ENCODE measurements at regions of chr4 and their contacts with region 1.

Region 1: DNA sequence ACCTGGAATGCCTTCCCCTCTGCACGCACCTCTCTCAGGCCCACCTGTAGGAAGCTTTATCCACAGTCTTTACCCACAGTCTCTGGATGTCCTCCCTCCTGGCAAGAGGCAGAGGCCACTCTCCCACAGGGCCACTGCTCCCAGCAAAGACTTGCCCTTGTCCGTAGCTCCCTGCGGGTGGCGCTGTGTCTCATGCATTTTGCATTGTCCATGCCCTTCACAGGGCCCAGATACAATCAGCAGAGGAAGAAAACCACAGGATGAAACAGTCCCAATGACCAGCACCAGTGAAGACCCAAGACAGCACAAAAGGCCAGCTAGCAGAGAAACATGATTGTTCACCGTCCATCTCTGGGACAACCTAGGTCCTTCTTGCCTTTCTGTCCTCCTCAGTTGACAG is 2.1 kb upstream of the NSG1 start:
- DNase-seq: peak; percentile 37
- H3K4me3 ChIP-seq: no peak overlapping the region
- H3K27ac ChIP-seq: no peak overlapping the region
- H3K4me1 ChIP-seq: peaks cover 14% of the 10 kb centered on the region
- H3K27me3 ChIP-seq: peaks cover 2% of the 10 kb centered on the region
- CTCF ChIP-seq: peak; percentile 58 to 79

Region 2: DNA sequence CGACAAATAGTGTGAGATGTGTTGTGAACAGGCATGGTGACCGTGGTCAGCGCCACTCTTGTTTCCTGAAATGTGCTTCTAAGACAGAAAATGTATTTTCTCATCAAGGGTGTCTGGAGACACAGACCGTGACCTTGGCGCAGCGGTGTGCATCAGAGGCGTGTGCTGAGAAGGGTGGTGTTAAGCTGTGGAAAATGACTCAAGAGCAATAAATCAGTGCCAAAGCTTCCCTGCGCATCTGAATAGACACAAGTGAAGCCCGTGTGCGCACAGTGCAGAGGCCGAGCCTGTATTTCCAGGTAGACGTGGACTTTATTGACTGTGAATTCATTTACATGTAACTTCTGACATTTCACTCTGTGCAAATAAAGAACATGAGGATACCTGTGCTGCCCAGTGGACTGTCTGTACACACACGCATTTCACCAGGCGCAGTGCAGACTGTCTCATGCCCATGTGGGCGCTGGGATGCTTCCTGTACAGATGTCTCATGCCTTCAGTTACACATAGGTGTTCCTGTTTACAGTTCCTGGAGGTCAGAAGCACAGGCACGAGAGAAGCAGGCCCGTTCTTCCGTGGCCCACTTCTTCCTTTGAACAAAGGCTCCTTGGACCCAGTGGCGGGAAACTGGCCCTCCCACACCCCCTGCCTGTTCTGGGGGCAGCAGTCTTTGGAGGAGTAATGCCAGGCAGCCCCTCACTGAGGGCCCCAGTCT is 34.0 kb after region 1 on chr4:
- CTCF ChIA-PET with region 1: no interaction called
- dilution Hi-C with region 1: loop called (anchors 5 kb)
- in situ Hi-C with region 1: no loop called
- intact Hi-C with region 1: no loop called
- DNase-seq: no peak
- H3K4me3 ChIP-seq: no peak overlapping the region
- H3K27ac ChIP-seq: no peak overlapping the region
- H3K4me1 ChIP-seq: no peaks in the 10 kb centered on the region
- H3K27me3 ChIP-seq: no peaks in the 10 kb centered on the region
- CTCF ChIP-seq: no peak

Region 3: DNA sequence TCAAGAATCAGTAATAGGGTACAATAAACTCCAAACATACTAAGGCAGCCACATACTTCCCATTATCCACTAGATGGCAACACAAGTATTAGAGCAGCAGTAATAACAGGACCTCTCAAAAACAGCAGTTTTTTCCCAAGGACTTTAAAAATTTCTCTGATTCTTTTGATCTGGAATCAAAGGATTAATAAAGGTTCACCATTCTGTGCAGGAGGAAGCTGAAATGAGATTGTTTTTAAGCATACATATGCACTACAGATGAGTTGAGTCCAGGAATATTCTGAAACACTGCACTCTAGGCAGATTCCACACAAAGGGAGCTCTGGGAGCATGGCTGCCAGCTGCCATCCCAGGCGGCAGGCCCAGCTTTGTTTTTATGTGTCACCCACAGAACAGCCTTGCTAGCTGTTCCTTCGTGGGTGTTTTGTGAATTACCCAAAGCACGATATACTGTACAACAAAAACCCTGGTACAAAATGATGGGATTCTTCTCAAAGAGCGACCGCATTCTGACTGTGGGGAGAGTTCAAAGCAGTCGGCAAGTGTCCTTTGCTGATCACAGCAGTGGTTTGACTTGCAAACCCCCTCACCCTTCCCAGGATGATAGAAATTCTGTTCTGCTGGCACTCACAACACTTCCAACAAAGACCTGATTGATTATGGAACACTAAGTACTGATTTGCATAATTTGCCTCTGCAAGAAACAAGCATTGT is 96.0 kb after region 1 on chr4:
- CTCF ChIA-PET with region 1: no interaction called
- dilution Hi-C with region 1: no loop called
- in situ Hi-C with region 1: no loop called
- intact Hi-C with region 1: no loop called
- DNase-seq: no peak
- H3K4me3 ChIP-seq: no peak overlapping the region
- H3K27ac ChIP-seq: no peak overlapping the region
- H3K4me1 ChIP-seq: peaks cover 2% of the 10 kb centered on the region
- H3K27me3 ChIP-seq: no peaks in the 10 kb centered on the region
- CTCF ChIP-seq: peak; percentile 29 to 45

Measured in mammary epithelial cell (primary cell).